HAP-1 (cell line): ENCODE measurements at regions of chr4 and their contacts with region 1.

Region 1: DNA sequence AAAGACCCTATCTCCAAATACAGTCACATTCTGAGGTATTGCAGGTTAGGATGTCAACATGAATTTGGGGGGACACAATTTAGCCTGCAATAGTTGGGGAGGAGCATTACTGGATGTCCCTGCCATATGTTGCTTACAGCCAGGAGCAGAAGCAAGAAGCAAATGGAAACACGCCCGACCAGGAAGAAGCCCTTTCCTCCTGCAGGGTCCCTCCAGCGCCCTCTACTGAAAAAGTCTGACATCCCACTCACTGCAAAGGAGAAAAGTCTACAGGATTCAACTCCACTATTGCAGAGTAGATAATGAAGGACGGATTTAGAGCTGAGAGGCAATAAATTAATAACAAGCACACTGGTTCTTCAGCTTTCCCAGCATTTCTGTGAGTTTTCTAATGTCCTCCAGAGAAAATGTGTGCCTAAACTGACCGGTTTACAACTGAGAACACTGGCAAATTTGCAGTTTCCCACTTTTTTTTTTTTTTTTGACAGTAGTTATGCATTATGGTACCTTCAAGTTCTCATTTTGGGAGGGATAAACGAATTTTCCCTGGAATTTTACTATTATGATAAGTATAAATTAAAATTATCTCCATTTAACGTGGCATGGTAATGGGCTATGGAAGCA is 31.7 kb downstream of the COQ2 start:
- DNase-seq: peak; percentile 46 to 81
- H3K4me3 ChIP-seq: no peak overlapping the region
- H3K4me1 ChIP-seq: peaks cover 10% of the 10 kb centered on the region
- H3K27me3 ChIP-seq: no peaks in the 10 kb centered on the region

Region 2: DNA sequence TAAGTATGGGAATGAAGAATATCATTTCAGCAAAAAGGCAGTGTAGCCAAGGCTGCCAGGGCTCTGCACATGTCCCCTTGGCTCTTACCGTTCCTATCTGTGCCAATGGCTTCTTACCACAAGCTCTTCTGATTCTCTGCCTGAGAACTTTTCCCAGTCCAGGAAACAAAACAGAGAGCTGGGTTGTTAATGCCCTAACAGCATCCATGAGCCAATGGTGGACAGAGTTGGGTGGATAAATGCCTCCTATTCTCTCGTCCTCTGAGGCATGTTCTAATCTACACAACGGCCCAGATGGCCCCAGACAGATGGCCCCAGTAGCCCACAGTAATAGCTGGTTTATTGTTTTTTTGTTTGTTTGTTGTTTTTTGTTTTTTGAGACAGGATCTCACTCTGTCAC is 482.3 kb before region 1 on chr4:
- in situ Hi-C with region 1: no loop called
- DNase-seq: no peak
- H3K4me3 ChIP-seq: no peak overlapping the region
- H3K4me1 ChIP-seq: no peaks in the 10 kb centered on the region
- H3K27me3 ChIP-seq: no peaks in the 10 kb centered on the region

Region 3: GRCh38 chr4:83083925-83084475 is 168.9 kb before region 1 on chr4:
- in situ Hi-C with region 1: loop called (anchors 10 kb)
- DNase-seq: no peak
- H3K4me3 ChIP-seq: no peak overlapping the region
- H3K4me1 ChIP-seq: no peaks in the 10 kb centered on the region
- H3K27me3 ChIP-seq: no peaks in the 10 kb centered on the region